ENCODE measurements at regions of chr2 and their contacts with region 1.

Region 1: GRCh38 chr2:70907130-70908057 is 28.3 kb upstream of the ATP6V1B1 start:
- DNase-seq: no peak
- ATAC-seq: peak in 1 of 4 donors; percentile 18
- H3K4me3 ChIP-seq: peak overlapping the region in 8 of 12 donors; percentile 12 to 45 (median 28)
- H3K27ac ChIP-seq: no peak overlapping the region
- H3K4me1 ChIP-seq: peaks cover 0 to 15% (median under 1%) of the 10 kb centered on the region in 12 donors
- H3K27me3 ChIP-seq: peaks cover 33 to 100% (median 95%) of the 10 kb centered on the region in 9 donors
- CTCF ChIP-seq: no peak
- POLR2A ChIP-seq: no peak

Region 2: DNA sequence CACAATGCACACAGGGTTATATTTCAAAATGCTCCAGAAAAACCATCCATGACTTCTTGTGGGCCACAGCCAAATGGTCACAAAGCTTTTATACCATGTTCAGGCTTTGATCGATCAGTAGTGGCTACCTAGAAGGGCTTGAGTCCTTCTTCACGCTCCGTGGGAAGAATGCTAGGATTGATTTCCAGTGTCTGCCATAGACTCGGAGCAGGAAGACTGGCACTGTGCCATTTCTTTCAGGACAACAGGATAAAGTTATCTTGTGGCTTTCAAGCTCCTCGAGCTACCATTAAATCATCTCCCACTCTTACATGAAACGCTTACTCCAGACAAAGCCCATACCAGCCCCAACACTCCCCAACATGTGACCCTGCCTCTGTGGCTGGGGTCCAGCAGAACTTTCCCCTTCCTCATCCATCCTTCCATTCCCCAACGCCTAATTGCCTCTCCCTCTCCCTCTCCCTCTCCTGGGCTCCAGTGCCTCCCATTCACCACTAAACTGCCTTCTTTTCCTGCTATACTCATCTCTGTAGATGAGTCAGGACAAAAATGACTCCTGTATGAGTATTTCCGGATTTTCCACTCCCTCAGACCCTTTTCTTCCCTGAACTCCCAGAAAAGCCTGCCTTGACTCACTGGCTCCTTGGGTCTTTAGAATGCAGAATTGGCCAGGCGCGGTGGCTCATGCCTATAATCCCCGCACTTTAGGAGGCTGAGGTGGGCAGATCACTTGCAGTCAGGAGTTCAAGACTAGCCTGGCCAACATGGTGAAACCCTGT is 180.3 kb before region 1 on chr2:
- intact Hi-C with region 1: no loop called
- DNase-seq: no peak
- ATAC-seq: no peak
- H3K4me3 ChIP-seq: no peak overlapping the region
- H3K27ac ChIP-seq: no peak overlapping the region
- H3K4me1 ChIP-seq: no peaks in the 10 kb centered on the region
- H3K27me3 ChIP-seq: no peaks in the 10 kb centered on the region
- CTCF ChIP-seq: no peak
- POLR2A ChIP-seq: no peak

Region 3: GRCh38 chr2:70871398-70872211 is 35.8 kb before region 1 on chr2:
- intact Hi-C with region 1: loop called in 1 of 10 experiments (anchors 5 kb)
- DNase-seq: peak; percentile 83 to 92 (median 87)
- ATAC-seq: peak; percentile 89 to 97 (median 96)
- H3K4me3 ChIP-seq: peak overlapping the region in 3 of 12 donors; percentile 2 to 25 (median 15)
- H3K27ac ChIP-seq: no peak overlapping the region
- H3K4me1 ChIP-seq: peaks cover 0 to 13% (median 0%) of the 10 kb centered on the region in 12 donors
- H3K27me3 ChIP-seq: peaks cover 0 to 68% (median 44%) of the 10 kb centered on the region in 9 donors
- CTCF ChIP-seq: peak; percentile 87 to 93 (median 91)
- POLR2A ChIP-seq: no peak

Region 4: DNA sequence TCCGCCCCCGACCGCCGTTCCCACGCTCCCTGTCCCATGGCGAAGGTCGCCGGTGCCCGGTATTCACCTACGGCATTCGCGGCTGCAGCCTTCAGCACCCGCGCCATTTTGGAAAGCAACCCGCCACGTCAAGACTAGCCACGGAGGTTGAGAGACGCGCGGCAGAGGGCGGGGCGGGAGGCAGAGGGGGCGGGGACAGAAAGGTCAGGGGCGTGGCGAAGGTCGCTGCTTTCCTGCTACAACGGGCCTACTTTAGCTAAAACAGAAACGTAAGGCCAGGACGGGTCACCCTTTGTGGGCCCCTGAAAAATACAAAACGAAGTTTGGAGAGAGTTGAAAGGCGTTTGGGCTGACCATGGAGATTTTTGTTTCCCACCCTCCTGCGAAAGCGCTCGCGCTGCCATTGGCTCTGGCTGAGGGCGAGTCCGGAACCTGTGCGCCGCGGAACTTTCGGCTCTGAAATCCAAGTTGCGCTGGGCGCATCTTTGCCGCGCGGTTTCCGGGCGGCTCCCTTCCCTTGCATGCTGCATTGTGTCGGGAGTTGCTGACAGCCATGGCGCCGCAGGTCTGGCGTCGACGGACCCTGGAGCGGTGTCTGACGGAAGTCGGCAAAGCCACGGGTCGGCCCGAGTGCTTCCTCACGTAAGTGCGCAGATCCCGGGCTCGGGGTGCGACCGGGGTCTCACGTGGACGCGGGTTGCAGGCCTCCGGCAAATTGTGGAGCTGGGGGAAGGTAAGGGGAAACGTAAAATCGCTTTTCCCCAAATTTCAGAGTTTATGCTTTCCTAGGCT is 222.9 kb after region 1 on chr2 and contains the starts of genes MCEE and MPHOSPH10:
- intact Hi-C with region 1: no loop called
- DNase-seq: peak; percentile 91 to 95 (median 93)
- ATAC-seq: peak; percentile 97 to 98 (median 97)
- H3K4me3 ChIP-seq: peak within 1 kb of the TSS; percentile 77 to 98 (median 88)
- H3K27ac ChIP-seq: peak within 1 kb of the TSS; percentile 86 to 99 (median 94)
- H3K4me1 ChIP-seq: peaks cover 0 to 45% (median 26%) of the 10 kb centered on the region in 12 donors
- H3K27me3 ChIP-seq: no peaks in the 10 kb centered on the region
- CTCF ChIP-seq: no peak
- POLR2A ChIP-seq: peak in 1 of 2 donors; percentile 58
- total RNA-seq, gene MCEE: 23.8 to 36.8 (median 29.3) TPM
- total RNA-seq, gene MPHOSPH10: 12.3 to 35.6 (median 22.7) TPM